IMR-90 (cell line): ENCODE measurements at regions of chr17 and their contacts with region 1.

Region 1: GRCh38 chr17:78421484-78422266 is 43.2 kb downstream of the PGS1 start:
- DNase-seq: peak; percentile 65
- ATAC-seq: peak; percentile 90
- H3K4me3 ChIP-seq: no peak overlapping the region
- H3K27ac ChIP-seq: no peak overlapping the region
- H3K4me1 ChIP-seq: peaks cover 10% of the 10 kb centered on the region
- H3K27me3 ChIP-seq: no peaks in the 10 kb centered on the region
- CTCF ChIP-seq: peak; percentile 99
- POLR2A ChIP-seq: no peak
- RAD21 ChIP-seq: peak; percentile 97

Region 2: GRCh38 chr17:78112518-78113226 is 309.0 kb before region 1 on chr17:
- CTCF ChIA-PET with region 1: no interaction called
- POLR2A ChIA-PET with region 1: no interaction called
- dilution Hi-C with region 1: no loop called
- in situ Hi-C with region 1: loop called (anchors 10 kb)
- intact Hi-C with region 1: no loop called
- DNase-seq: peak; percentile 13
- ATAC-seq: peak; percentile 94
- H3K4me3 ChIP-seq: no peak overlapping the region
- H3K27ac ChIP-seq: no peak overlapping the region
- H3K4me1 ChIP-seq: no peaks in the 10 kb centered on the region
- H3K27me3 ChIP-seq: peaks cover 9% of the 10 kb centered on the region; the same call in 1 of the 2 replicates
- CTCF ChIP-seq: peak; percentile 95
- POLR2A ChIP-seq: no peak
- RAD21 ChIP-seq: peak; percentile 91

Region 3: DNA sequence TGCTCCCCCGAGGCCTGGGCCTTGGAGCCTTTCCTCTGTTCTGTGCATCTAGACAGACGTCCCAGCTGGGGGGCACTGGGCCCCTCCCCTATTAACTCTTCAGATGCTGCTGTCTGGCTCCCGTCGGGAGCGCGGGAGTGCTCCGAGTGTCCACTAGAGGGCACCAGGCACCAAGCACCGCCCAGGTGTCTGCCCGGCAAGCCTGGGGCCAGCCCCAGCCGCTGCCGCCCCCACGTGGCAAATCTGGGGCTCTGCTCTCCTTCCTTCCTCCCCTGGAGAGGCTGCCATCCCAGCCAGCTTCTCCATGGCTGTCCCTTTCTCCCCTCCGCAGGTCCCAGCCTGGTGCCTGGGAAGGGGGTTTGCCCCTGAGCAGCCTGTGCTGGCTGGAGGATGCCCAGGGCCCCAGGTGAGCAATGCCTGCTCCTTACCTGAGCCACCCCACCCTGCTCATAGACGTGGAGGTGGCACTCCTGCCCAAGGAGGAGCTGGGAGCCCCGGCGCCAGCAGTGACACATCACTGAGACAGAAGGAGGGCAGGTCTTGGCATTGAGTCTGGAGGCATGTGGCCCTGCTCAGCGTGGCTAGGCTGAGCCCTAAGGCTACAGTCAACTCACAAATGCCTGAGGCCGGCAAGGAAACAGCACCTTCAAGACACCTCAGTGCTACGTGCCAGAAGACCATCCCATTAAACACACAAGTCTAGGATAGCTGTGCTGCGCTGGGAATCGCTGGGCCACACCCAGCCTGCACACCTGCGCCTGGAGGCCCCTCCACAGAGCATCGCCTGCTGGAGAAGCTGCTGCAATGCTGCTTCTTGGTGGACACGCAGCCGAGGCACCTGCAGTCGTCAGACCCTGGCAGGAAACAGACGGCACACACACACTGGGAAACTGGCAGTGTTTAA is 170.5 kb before region 1 on chr17:
- CTCF ChIA-PET with region 1: interaction called, 3 read pairs
- POLR2A ChIA-PET with region 1: interaction called, 4 read pairs
- dilution Hi-C with region 1: no loop called
- in situ Hi-C with region 1: no loop called
- intact Hi-C with region 1: loop called (anchors 1 kb)
- DNase-seq: peak; percentile 76
- ATAC-seq: peak; percentile 91
- H3K4me3 ChIP-seq: no peak overlapping the region
- H3K27ac ChIP-seq: no peak overlapping the region
- H3K4me1 ChIP-seq: peaks cover 6% of the 10 kb centered on the region
- H3K27me3 ChIP-seq: peaks cover 3% of the 10 kb centered on the region; the same call in 1 of the 2 replicates
- CTCF ChIP-seq: peak; percentile 100
- POLR2A ChIP-seq: 0 out of 2 replicates have a peak, but pooled peaks have one; percentile 38
- RAD21 ChIP-seq: peak; percentile 98

Region 4: GRCh38 chr17:78289802-78290363 is 131.8 kb before region 1 on chr17:
- CTCF ChIA-PET with region 1: interaction called, 3 read pairs
- POLR2A ChIA-PET with region 1: no interaction called
- dilution Hi-C with region 1: no loop called
- in situ Hi-C with region 1: loop called (anchors 10 kb)
- intact Hi-C with region 1: loop called (anchors 1 kb)
- DNase-seq: peak; percentile 92
- ATAC-seq: peak; percentile 100
- H3K4me3 ChIP-seq: no peak overlapping the region
- H3K27ac ChIP-seq: no peak overlapping the region
- H3K4me1 ChIP-seq: peaks cover 3% of the 10 kb centered on the region; the same call in 1 of the 2 replicates
- H3K27me3 ChIP-seq: no peaks in the 10 kb centered on the region
- CTCF ChIP-seq: peak; percentile 83
- POLR2A ChIP-seq: 0 out of 2 replicates have a peak, but pooled peaks have one; percentile 37
- RAD21 ChIP-seq: peak; percentile 95

Region 5: DNA sequence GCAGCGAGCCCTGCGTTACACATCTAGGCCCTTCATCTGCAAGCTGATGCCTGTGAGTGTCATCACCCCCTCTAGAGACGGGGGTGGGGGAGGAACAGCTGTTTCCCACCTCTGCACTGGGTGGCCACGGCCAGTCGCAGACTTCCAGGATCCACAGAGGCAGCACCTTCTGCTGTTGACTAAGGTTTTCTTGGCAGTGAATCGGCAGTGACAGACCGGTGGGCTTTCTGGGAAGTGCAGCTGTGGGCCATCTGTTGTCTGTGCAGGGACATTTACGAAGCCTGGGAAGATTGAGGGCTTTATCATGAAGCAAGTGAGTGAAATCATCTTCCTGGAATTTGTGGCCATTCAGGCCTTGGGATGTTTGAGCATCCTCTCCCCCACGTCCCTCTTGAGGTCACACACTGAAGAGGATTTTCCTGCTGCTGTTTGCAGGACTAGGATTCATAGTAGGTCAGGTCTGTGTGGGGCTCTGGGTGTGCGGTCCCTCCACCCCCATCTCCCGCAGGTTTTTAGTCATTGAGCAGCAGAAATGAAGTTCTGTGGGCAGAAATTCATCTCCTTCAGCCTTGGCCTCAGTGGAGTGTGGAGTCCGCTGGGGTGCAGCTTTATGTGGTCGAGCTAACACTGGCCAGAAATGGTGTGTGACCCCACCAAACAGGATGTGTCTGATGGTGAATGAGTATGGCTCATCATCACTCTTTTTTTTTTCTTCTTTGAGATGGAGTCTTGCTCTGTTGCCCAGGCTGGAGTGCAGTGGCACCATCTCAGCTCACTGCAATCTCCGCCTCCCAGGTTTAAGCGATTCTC is 31.2 kb before region 1 on chr17:
- CTCF ChIA-PET with region 1: interaction called, 10 read pairs
- POLR2A ChIA-PET with region 1: no interaction called
- dilution Hi-C with region 1: no loop called
- in situ Hi-C with region 1: no loop called
- intact Hi-C with region 1: no loop called
- DNase-seq: peak; percentile 100
- ATAC-seq: peak; percentile 72
- H3K4me3 ChIP-seq: no peak overlapping the region
- H3K27ac ChIP-seq: peak overlapping the region; percentile 82
- H3K4me1 ChIP-seq: peaks cover 43% of the 10 kb centered on the region
- H3K27me3 ChIP-seq: no peaks in the 10 kb centered on the region
- CTCF ChIP-seq: peak; percentile 24; the same call in 1 of the 2 replicates
- POLR2A ChIP-seq: peak; percentile 42; the same call in 1 of the 2 replicates
- RAD21 ChIP-seq: peak; percentile 42; the same call in 1 of the 2 replicates